ENCODE measurements at regions of chr6 and their contacts with region 1.

Region 1: DNA sequence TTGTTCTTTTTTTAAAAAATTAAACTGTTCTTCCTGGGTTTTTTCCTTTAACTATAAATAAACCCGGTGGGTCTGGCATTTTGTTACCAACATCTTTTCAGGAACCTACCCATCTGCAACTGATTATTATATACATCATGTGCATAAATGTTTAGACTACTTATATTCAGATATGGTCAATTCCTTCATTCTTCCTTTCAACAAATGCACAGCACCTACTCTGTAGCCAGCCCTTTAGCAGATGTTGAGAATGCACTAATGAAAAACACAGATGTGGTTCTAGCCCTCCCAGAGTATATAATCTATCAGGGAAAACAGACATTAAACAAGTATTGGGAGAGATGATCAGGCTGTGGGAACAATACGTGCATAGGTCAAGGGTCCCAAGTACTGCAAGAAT is 237.1 kb downstream of the UST start:
- DNase-seq: no peak

Region 2: GRCh38 chr6:148915810-148916209 is 68.2 kb before region 1 on chr6:
- intact Hi-C with region 1: loop called in 1 of 2 experiments (anchors 2 kb)
- DNase-seq: no peak

Measured in posterior vena cava (tissue), 2 donors.